Left cardiac atrium (tissue), 4 donors: ENCODE measurements at regions of chr13 and their contacts with region 1.

Region 1: GRCh38 chr13:20489185-20489820 is 36.4 kb downstream of the CRYL1 start:
- DNase-seq: no peak
- ATAC-seq: peak; percentile 61 to 62

Region 2: GRCh38 chr13:20182231-20182846 is 307.0 kb before region 1 on chr13:
- intact Hi-C with region 1: loop called in 1 of 2 experiments (anchors 5 kb)
- DNase-seq: no peak
- ATAC-seq: peak; percentile 82 to 84

Region 3: GRCh38 chr13:20197361-20197834 is 291.9 kb before region 1 on chr13:
- intact Hi-C with region 1: loop called in 1 of 2 experiments (anchors 2 kb)
- DNase-seq: no peak
- ATAC-seq: peak in 1 of 2 donors; percentile 19

Region 4: DNA sequence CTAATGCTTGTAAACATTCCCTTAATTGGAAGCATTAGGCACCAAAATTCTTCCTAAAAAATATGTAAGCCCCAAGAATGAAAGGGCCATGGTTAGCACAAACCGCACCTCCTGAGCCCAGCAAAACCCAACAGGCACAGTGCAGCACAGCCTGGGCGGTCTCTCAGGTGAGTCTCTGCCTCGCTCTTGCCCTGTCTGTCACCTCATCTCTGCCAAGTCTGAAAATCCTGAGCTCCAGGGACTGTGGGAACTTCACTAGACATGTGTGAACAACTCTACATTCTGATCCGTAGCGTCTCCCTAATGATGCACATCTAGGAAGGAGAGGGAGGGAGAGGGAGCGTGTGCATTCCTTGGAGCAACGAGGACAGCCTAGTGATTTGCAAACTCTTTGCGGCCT is 168.4 kb before region 1 on chr13:
- intact Hi-C with region 1: no loop called
- DNase-seq: no peak
- ATAC-seq: no peak